ENCODE measurements at regions of chr17 and their contacts with region 1.

Region 1: GRCh38 chr17:64984851-64985521 is 65.7 kb upstream of the LRRC37A3 start:
- DNase-seq: peak; percentile 71
- H3K4me3 Mint-ChIP-seq: peak overlapping the region; percentile 70
- H3K27ac Mint-ChIP-seq: peak overlapping the region; percentile 98
- H3K4me1 Mint-ChIP-seq: peaks cover 57% of the 10 kb centered on the region
- H3K27me3 Mint-ChIP-seq: no peaks in the 10 kb centered on the region

Region 2: GRCh38 chr17:64459284-64459747 is 525.7 kb before region 1 on chr17:
- CTCF ChIA-PET with region 1: no interaction called
- POLR2A ChIA-PET with region 1: no interaction called
- DNase-seq: no peak
- H3K4me3 Mint-ChIP-seq: no peak overlapping the region
- H3K27ac Mint-ChIP-seq: no peak overlapping the region
- H3K4me1 Mint-ChIP-seq: peaks cover 24% of the 10 kb centered on the region
- H3K27me3 Mint-ChIP-seq: peaks cover 2% of the 10 kb centered on the region

Region 3: DNA sequence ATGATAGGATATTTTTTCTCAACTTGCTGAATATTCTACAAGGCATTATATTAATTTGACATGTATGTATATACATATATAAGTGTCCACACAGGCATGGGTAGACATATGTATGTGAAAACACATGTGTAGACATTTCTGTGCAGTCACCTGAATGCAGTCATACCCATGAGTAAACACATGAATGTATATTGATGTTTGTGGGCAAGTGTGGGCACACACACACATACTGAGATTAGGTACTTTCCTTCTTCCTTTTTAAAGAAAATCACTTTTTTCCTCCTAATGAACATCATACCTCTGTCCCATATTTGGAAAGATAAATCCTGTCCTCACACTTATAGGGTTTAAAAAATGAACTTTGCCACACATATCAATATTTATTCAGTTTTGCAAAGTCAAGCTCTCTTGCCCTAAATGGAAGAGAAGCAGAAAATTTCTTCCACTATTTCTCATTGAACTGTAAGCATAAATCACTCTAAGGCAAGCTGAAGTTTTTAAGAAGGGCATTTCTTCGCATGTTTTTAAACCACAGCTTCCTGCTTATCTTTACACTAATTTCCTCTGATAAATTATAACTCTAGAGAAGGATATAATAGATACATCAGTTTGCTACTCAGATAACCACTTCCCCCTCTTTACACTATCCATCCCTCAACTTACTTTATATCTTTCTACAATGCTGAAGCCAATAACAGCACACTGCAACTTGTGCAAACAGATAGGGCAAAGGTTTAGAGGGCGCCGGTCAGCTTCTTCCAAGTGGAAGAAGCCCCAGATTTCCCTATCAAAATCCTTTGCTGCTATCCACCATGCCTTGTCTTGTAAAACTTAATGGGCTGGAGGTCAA is 16.1 kb before region 1 on chr17:
- CTCF ChIA-PET with region 1: interaction called, 7 read pairs
- POLR2A ChIA-PET with region 1: interaction called, 165 read pairs
- DNase-seq: no peak
- H3K4me3 Mint-ChIP-seq: peak overlapping the region; percentile 26
- H3K27ac Mint-ChIP-seq: peak overlapping the region; percentile 93
- H3K4me1 Mint-ChIP-seq: peaks cover 75% of the 10 kb centered on the region
- H3K27me3 Mint-ChIP-seq: no peaks in the 10 kb centered on the region

Region 4: GRCh38 chr17:65020313-65020712 is 35.3 kb after region 1 on chr17:
- CTCF ChIA-PET with region 1: no interaction called
- POLR2A ChIA-PET with region 1: interaction called, 16 read pairs
- DNase-seq: no peak
- H3K4me3 Mint-ChIP-seq: no peak overlapping the region
- H3K27ac Mint-ChIP-seq: no peak overlapping the region
- H3K4me1 Mint-ChIP-seq: peaks cover 65% of the 10 kb centered on the region
- H3K27me3 Mint-ChIP-seq: no peaks in the 10 kb centered on the region

Region 5: GRCh38 chr17:65039336-65039988 is 54.5 kb after region 1 on chr17:
- CTCF ChIA-PET with region 1: no interaction called
- POLR2A ChIA-PET with region 1: interaction called, 28 read pairs
- DNase-seq: peak; percentile 66
- H3K4me3 Mint-ChIP-seq: peak overlapping the region; percentile 58
- H3K27ac Mint-ChIP-seq: peak overlapping the region; percentile 82
- H3K4me1 Mint-ChIP-seq: peaks cover 84% of the 10 kb centered on the region
- H3K27me3 Mint-ChIP-seq: no peaks in the 10 kb centered on the region

Region 6: DNA sequence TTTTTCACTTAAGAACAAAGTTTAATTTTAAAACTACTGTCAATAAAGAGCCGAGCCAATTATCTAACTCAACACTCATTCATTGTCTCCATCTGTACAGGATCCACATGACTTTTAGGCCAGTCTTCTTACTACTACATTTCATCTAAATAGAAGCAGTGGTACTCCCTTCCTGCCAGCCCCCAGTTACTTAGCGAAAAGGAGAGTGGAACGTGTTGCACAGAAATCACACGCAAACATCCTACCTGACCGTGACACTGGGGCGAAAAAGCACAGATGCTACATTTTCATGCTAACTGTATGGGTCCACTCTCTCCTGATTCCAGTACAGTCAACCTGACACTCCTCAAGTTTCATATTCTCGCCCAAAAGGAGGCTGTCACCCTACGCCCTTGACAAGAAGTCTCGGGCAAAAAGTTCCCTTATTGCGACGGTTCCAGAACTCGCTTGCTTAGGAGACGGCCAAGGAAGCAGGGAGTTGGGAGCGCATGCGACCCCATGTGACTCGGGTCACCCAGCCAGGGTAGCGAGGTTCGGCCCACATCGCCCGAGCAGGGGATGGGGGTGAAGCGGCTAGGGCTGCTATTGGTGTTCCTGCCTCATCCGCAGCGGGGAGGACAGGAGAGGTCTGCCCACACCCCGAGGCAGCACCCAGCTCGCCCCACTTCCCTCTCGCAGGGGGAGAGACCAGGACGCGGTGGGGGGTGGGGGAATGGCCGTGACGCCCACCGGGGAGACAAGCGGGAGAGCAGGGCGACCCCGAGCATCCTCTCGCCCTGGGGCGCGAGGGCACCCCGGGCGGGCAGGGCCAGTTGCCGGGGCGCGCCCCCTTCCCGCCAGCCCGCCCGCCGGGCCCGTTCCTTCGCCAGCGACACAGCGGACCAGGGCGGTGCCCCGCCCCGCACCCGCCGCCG is 70.6 kb after region 1 on chr17:
- CTCF ChIA-PET with region 1: interaction called, 4 read pairs
- POLR2A ChIA-PET with region 1: interaction called, 39 read pairs
- DNase-seq: peak; percentile 57
- H3K4me3 Mint-ChIP-seq: peak overlapping the region; percentile 96
- H3K27ac Mint-ChIP-seq: peak overlapping the region; percentile 91
- H3K4me1 Mint-ChIP-seq: peaks cover 51% of the 10 kb centered on the region
- H3K27me3 Mint-ChIP-seq: peaks cover 2% of the 10 kb centered on the region

Region 7: GRCh38 chr17:65074778-65075250 is 89.8 kb after region 1 on chr17:
- CTCF ChIA-PET with region 1: no interaction called
- POLR2A ChIA-PET with region 1: no interaction called
- DNase-seq: no peak
- H3K4me3 Mint-ChIP-seq: no peak overlapping the region
- H3K27ac Mint-ChIP-seq: no peak overlapping the region
- H3K4me1 Mint-ChIP-seq: no peaks in the 10 kb centered on the region
- H3K27me3 Mint-ChIP-seq: no peaks in the 10 kb centered on the region

Region 8: DNA sequence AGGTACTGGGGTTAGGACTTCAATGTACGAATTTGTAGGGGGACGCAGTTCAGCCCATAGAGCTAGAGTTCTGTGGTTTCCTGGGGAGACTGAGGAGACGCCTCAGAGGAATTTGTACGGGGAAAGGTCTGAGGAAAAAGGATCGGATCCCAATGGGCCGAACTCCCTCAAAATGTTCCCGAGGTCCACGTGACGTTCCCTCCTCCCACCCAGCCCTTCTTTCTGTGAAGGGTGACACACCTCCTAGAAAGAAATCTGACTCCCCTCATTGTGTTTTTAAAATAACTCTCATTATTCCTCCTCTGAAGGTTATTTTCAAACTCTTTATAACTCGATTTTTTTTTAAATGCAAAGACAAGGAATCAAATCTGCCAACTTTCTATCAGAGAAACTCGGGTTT is 160.8 kb after region 1 on chr17:
- CTCF ChIA-PET with region 1: no interaction called
- POLR2A ChIA-PET with region 1: no interaction called
- DNase-seq: no peak
- H3K4me3 Mint-ChIP-seq: no peak overlapping the region
- H3K27ac Mint-ChIP-seq: no peak overlapping the region
- H3K4me1 Mint-ChIP-seq: peaks cover 21% of the 10 kb centered on the region
- H3K27me3 Mint-ChIP-seq: peaks cover 3% of the 10 kb centered on the region

Region 9: GRCh38 chr17:65181237-65182061 is 196.5 kb after region 1 on chr17:
- CTCF ChIA-PET with region 1: interaction called, 5 read pairs
- POLR2A ChIA-PET with region 1: interaction called, 36 read pairs
- DNase-seq: peak; percentile 69
- H3K4me3 Mint-ChIP-seq: peak overlapping the region; percentile 29
- H3K27ac Mint-ChIP-seq: peak overlapping the region; percentile 98
- H3K4me1 Mint-ChIP-seq: peaks cover 88% of the 10 kb centered on the region
- H3K27me3 Mint-ChIP-seq: no peaks in the 10 kb centered on the region